PC-3 (cell line): ENCODE measurements at regions of chr12 and their contacts with region 1.

Region 1: GRCh38 chr12:109449845-109450532 is 27.1 kb downstream of the KCTD10 start:
- DNase-seq: no peak
- ATAC-seq: no peak
- H3K4me3 ChIP-seq: no peak overlapping the region
- H3K27ac ChIP-seq: no peak overlapping the region
- H3K4me1 ChIP-seq: peaks cover 12% of the 10 kb centered on the region
- H3K27me3 ChIP-seq: no peaks in the 10 kb centered on the region
- CTCF ChIP-seq: no peak; the same call in 1 of the 2 replicates

Region 2: DNA sequence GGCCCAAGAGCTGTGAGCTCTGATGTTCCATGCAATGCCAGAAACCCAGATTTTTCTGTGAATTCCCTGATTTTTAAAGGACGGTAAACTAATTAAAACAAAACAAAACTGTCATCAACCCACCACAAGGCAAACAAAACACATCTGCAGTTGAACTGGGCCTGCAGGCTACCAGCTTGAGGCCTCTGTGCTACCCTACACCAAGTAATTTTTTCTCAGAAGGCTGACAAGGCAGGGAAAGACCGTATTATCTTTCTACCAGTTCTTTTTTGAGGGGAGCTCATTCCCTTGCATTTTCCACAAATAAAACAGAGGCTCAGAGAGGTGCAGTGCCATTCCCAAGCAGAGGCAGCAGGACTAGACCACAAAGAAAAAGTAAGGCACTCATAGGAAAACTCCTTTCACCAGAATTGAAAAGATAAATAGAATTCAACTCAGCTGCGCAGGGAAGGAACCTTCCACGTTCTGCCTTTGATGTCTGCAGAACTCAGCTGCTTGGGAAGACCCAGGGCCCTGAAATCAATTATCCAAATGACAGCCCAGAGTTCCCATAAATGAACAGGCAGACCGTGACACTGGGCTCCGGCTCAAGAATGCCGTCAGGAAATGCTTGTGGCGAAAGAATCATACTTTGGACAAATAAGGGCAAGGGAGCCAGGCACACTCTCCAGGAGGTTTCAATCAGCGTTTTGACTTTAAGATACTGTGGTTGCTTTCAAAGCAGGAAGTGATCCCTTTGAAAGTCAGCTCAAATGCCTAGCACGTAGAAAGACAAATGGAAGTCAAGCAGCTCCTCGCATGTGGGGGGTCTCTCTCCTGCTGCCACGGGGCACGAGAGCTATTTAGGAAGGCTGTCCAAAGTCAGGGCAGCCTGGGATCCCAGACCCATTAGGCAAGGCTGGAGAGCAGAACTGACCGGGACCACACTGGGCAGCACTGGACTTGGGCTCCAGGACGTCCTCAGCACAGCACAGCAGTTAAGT is 13.0 kb after region 1 on chr12:
- CTCF ChIA-PET with region 1: no interaction called
- POLR2A ChIA-PET with region 1: no interaction called
- intact Hi-C with region 1: loop called (anchors 1 kb)
- DNase-seq: peak; percentile 94
- ATAC-seq: peak; percentile 77
- H3K4me3 ChIP-seq: peak overlapping the region; percentile 46; the same call in 1 of the 2 replicates
- H3K27ac ChIP-seq: peak overlapping the region; percentile 85
- H3K4me1 ChIP-seq: peaks cover 55% of the 10 kb centered on the region
- H3K27me3 ChIP-seq: no peaks in the 10 kb centered on the region
- CTCF ChIP-seq: no peak

Region 3: DNA sequence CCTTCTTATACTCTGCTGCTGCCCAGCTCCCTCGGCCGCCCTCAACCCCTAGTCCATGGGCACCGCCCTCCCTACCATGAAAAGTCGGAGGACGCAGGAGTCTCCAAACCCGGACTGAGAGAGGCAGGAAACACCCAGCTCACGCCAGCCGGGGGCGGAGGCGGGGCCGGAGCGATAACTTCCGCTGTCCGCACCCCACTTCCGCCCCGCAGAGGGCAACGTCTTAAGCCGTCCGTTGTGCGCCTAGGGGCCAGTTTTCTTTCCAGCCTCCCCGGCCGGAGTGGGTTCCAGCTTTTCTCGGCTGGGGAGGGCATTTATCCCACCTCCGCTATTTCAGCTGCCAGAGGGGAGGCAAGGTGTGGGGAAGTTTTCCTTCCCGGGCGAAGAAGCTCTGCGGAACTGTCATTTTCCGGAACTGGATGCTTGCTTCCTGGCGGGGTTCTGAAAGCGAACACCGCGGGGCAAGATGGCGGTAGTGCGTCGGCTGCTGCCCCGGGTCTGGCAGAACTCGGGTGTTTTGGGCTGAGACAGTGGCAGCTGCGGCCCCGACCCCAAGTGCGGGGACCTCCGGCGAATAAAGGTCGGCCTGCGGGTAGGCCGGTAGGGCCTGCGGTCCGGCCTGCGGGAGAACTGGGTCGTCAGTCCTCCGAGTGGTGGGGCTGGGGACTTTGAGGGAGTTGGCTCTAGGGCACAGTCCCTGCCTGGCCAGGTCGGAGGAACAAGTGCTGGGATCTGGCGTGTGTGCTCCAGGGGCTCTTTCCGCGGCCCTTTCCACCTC is 27.4 kb after region 1 on chr12 and contains the starts of genes KCTD10 and UBE3B:
- CTCF ChIA-PET with region 1: no interaction called
- POLR2A ChIA-PET with region 1: no interaction called
- intact Hi-C with region 1: loop called (anchors 1 kb)
- DNase-seq: peak; percentile 93
- ATAC-seq: peak; percentile 93
- H3K4me3 ChIP-seq: peak within 1 kb of the TSS; percentile 90
- H3K27ac ChIP-seq: peak within 1 kb of the TSS; percentile 65
- H3K4me1 ChIP-seq: peaks cover 20% of the 10 kb centered on the region
- H3K27me3 ChIP-seq: no peaks in the 10 kb centered on the region
- CTCF ChIP-seq: no peak
- total RNA-seq, gene KCTD10: 42.3 and 58.1 TPM in 2 replicates
- total RNA-seq, gene UBE3B: 25.7 and 35.6 TPM in 2 replicates

Region 4: DNA sequence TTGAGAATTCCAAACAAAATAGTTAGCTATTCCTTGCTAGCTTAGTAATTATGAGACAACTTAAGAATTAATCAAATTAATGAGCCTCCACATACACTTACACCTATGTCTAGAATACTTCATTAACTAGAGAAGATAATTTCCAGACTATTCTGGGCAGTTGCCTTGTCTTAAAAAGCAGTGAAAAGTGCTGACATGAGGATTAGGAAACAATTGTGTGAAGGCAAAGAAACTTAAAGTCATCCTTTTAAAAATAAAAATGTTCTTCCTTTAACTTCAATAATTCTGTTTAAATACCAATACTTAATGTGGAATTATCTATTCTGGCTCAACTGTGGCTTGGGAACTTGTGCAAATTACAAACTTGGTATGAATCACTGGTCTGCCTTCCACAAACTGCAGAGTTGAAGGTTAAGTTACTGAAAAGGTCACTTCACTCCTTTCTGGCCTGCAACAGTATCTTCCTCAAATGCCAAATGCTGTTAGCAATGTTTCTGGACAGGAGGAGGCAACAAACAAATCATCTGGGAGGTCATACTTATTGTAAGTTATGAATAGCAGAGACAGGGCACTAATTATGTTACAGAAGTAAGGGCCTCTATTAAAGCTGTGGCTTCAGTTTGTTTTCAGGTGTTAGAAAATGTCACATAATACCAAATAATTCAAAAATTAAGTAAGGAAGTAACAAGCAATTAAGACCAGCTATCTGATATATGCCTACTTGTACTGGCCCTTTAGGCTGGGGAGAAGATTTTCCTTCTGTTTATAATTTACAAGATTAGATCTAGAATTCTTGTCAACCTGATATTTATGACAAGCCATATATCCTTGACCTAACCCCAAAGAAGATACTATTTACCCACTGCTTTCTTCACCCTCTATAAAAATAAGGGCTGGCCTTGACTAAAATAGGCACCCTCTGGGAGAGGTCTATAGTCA is 1114.0 kb after region 1 on chr12:
- CTCF ChIA-PET with region 1: no interaction called
- POLR2A ChIA-PET with region 1: interaction called, 19 read pairs
- intact Hi-C with region 1: no loop called
- DNase-seq: peak; percentile 19
- ATAC-seq: no peak
- H3K4me3 ChIP-seq: no peak overlapping the region
- H3K27ac ChIP-seq: 0 out of 2 replicates have a peak overlapping the region, but pooled peaks have one; percentile 0
- H3K4me1 ChIP-seq: peaks cover 46% of the 10 kb centered on the region
- H3K27me3 ChIP-seq: no peaks in the 10 kb centered on the region
- CTCF ChIP-seq: no peak